ENCODE measurements at regions of chr5 and their contacts with region 1.

Region 1: DNA sequence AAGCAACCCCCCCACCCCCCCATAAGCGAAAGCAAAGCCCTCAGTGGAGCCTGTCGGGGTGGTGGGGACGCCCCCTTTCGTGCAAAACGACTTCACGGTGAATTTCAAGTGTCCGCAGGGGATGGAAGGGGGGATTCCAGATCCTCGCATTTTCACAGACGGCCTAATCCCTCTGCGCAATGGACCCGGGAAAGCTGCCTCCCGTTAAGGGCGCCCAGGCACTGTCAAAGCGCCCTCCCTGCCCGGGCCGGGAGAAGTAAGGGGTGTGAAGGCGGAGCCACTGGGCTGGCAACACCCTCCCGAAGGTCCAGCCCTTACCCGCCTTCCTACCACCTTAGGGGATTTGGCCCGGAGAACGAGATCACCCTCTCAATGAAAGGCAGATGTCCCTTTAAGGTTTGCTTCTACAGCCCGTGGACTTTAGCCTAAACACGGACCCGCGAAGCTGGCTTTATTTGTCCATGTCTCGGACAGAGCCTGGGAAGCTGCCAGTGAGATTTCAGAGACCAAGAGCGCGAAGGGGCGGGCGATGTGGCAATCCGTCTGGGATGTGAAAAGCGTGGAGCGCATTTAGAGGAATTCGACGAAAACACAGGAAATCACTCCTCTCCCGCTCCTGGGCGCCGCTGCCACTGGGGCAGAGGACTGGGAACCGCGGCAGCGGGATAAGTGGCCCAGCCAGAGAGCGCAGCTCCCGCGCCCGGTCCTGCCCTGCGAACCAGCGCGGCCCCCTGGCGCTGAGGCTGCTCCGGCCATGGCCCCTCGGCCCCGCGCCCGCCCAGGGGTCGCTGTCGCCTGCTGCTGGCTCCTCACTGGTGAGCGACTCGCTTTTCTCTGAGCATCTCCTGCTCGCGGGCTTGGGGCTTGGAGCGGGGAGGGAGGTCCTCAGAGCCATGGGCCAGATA is at the starts of genes ITGA1 and PELO:
- DNase-seq: peak; percentile 81
- H3K4me3 ChIP-seq: peak within 1 kb of the TSS; percentile 66
- H3K27ac ChIP-seq: no peak within 1 kb of the TSS
- H3K4me1 ChIP-seq: peaks cover 4% of the 10 kb centered on the region
- H3K27me3 ChIP-seq: no peaks in the 10 kb centered on the region
- CTCF ChIP-seq: no peak; the same call in 1 of the 2 replicates
- total RNA-seq, gene ITGA1: 7.8 and 8.1 TPM in 2 replicates
- total RNA-seq, gene PELO: 20.0 and 20.3 TPM in 2 replicates

Region 2: GRCh38 chr5:52915176-52915875 is 127.5 kb after region 1 on chr5:
- CTCF ChIA-PET with region 1: interaction called, 3 read pairs
- POLR2A ChIA-PET with region 1: no interaction called
- intact Hi-C with region 1: loop called (anchors 1 kb)
- DNase-seq: peak; percentile 80
- H3K4me3 ChIP-seq: peak overlapping the region; percentile 41
- H3K27ac ChIP-seq: no peak overlapping the region
- H3K4me1 ChIP-seq: no peaks in the 10 kb centered on the region
- H3K27me3 ChIP-seq: no peaks in the 10 kb centered on the region
- CTCF ChIP-seq: peak; percentile 90

Region 3: GRCh38 chr5:53109443-53110127 is 321.7 kb after region 1 on chr5 and contains the start of gene MOCS2:
- CTCF ChIA-PET with region 1: no interaction called
- POLR2A ChIA-PET with region 1: no interaction called
- intact Hi-C with region 1: loop called (anchors 10 kb)
- DNase-seq: peak; percentile 94
- H3K4me3 ChIP-seq: peak within 1 kb of the TSS; percentile 79
- H3K27ac ChIP-seq: peak within 1 kb of the TSS; percentile 53
- H3K4me1 ChIP-seq: peaks cover 10% of the 10 kb centered on the region
- H3K27me3 ChIP-seq: no peaks in the 10 kb centered on the region
- CTCF ChIP-seq: no peak
- total RNA-seq, gene MOCS2: 38.9 and 41.7 TPM in 2 replicates

Measured in A673 (cell line).